Prostate gland (tissue), 2 donors: ENCODE measurements at regions of chr3 and their contacts with region 1.

Region 1: DNA sequence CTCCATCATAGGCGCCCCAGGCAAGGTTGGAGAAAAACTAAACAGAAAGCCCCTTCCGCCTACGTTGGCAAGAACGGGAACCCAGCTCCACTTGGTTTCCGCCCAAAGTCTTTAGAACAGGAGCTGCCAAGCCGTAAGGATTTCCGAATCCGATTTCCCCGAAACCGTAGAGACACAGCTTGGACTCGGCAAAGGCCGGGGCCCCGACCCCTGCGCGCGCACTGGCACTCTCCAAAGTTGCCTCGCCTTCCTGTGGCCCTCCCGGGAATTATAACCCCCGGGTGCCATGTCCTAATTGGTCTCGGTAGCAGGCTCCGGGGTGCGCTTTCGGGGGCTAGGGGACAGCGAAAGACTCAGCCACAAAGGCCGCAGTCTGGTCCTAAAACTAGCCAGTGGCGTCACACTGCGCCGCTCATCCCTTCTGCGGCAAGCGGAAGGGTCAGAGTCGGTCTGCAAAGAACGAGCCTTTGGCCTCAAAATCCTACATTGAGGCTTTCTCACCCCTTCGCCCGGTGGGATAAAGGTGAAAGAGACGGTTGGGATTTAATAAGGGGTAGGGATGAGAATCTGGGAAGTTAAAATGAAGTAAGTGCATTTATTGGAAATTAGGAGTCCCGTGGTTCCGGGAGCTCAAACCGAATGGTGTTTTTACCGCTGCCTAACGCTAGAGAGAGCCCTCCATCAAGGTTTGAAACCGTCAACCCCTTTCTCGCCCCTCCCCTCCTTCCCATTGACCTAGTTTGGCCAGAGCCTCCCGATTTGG is 6.8 kb downstream of the BCL6 start:
- DNase-seq: peak; percentile 87
- H3K4me3 ChIP-seq: peak overlapping the region; percentile 68 to 83
- H3K27ac ChIP-seq: peak overlapping the region; percentile 96 to 97
- H3K4me1 ChIP-seq: peaks cover 3% of the 10 kb centered on the region
- H3K27me3 ChIP-seq: no peaks in the 10 kb centered on the region
- CTCF ChIP-seq: peak; percentile 48 to 85 (median 66)
- POLR2A ChIP-seq: no peak

Region 2: DNA sequence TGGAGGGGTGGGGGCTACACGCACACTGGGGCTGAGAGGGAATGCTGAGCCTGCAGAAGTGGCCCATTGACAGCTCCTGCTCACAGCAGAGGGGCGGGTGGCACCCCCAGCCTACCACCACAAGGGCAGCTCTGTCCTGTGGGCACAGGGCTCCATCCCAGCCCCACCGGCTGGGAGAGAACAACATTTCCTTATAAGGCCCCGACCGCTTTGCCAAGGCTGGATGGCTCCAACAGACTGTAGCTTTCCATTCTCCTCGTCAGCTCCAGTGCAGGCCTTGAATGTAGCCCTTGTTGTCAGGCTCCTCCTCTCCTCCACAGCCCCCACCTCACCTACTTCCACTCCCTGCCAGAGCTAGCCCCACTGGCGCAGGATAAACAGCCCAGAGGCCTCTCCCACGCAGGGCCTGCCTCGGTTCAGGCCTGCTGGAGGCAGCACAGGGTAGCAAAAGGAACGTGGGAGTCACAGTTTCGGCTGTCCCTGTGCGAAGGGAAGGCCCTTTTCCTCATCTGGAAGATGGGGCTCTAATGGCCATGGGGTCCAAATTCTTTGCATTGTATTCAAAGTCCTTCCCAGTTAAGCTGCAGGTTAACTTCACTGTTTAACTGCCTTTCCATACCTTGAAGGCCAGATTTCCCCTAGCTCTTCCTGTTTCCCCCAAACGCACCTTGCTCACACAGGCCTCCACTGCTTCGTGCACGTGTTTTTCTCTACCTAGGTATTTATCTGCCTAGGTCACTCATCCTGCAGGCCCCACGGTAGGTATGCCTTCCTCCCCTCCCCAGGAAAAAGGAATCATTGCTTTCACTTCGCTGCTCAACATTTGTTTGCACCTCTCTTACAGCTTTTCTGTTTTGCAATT is 313.9 kb after region 1 on chr3:
- intact Hi-C with region 1: loop called (anchors 5 kb)
- DNase-seq: peak; percentile 66
- H3K4me3 ChIP-seq: no peak overlapping the region
- H3K27ac ChIP-seq: peak overlapping the region; percentile 44 to 75
- H3K4me1 ChIP-seq: peaks cover 9% of the 10 kb centered on the region
- H3K27me3 ChIP-seq: no peaks in the 10 kb centered on the region
- CTCF ChIP-seq: peak; percentile 19 to 73 (median 40)
- POLR2A ChIP-seq: no peak

Region 3: DNA sequence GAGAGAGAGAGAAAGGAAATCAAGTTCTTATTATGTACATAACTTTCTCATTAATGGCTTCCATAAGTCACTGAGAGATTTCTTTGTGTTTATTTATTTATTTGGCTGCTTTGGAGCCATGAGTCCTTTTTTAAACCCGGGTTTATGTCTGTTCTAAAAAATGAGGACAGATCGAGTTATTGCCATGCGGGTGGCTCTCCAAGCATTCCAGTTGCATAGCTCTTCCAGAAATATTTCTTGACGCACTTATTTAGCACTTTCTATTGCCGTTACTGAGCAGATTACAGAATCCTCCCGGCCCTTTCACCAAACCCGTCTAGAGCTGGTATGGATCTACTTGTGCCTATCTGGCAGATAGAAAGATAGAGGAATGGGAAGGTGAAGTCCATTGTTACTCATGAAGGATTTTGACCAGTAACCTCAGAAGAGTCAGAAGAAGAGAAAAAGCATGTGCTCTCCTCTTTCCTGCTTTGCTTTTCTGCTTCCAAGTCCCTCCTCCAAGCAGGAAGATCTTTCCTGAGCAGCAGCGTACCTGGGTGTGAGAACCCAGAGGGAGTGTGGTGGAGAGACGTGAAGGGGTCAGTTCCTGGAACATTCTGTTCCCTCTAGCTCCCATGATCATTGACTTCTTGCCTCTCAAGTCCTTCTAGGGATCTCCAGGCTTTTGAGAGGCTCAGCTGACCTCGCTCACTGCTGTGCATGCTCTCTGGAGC is 528.2 kb after region 1 on chr3:
- intact Hi-C with region 1: loop called (anchors 5 kb)
- DNase-seq: peak; percentile 23
- H3K4me3 ChIP-seq: peak overlapping the region in 1 of 2 donors; percentile 5
- H3K27ac ChIP-seq: peak overlapping the region; percentile 73 to 85
- H3K4me1 ChIP-seq: peaks cover 33% of the 10 kb centered on the region
- H3K27me3 ChIP-seq: no peaks in the 10 kb centered on the region
- CTCF ChIP-seq: no peak
- POLR2A ChIP-seq: no peak

Region 4: GRCh38 chr3:188954590-188955208 is 1216.2 kb after region 1 on chr3:
- intact Hi-C with region 1: loop called (anchors 1 kb)
- DNase-seq: peak; percentile 76
- H3K4me3 ChIP-seq: no peak overlapping the region
- H3K27ac ChIP-seq: no peak overlapping the region
- H3K4me1 ChIP-seq: no peaks in the 10 kb centered on the region
- H3K27me3 ChIP-seq: no peaks in the 10 kb centered on the region
- CTCF ChIP-seq: peak; percentile 83 to 97 (median 94)
- POLR2A ChIP-seq: no peak